ENCODE measurements at regions of chr14 and their contacts with region 1.

Region 1: DNA sequence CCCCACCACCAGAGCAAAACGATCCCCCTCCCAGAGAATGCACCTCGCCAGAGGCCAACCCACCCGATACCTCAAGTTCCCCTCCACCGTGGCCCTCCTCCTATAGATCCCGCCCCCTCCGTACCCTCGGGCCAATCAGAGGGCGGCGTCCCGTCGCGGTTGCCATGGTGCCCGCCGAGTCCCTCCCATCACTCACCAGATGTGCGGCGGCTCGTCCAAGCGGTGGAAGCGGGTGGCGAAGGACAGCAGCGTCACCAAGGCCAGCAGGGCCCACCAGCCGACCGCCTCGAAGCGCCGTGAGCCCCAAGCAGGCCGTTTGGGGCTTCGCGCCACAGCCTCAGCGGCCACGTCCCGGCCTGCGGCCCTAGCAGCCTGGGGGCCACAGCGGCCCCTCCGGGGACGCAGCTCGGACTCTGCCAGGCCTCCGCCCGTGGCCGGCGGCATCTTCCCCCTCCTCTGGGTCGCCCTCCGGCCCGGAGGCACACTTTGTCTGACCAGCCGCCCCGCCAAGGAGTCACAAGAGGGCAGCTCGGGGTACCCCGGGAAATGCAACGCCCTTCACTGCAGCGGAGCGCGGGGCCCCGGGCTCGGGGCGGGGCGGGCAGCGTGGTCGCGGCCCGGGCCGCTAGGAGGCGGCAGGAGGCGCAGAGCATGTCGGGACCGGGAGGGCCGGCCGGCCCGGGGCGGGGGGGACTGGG is at the start of gene POMT2:
- DNase-seq: peak; percentile 93
- ATAC-seq: peak; percentile 37
- H3K4me3 Mint-ChIP-seq: peak within 1 kb of the TSS; percentile 95
- H3K27ac Mint-ChIP-seq: peak within 1 kb of the TSS; percentile 99
- H3K4me1 Mint-ChIP-seq: peaks cover 15% of the 10 kb centered on the region
- H3K27me3 Mint-ChIP-seq: no peaks in the 10 kb centered on the region
- total RNA-seq, gene POMT2: 9.3 to 10.6 TPM

Region 2: DNA sequence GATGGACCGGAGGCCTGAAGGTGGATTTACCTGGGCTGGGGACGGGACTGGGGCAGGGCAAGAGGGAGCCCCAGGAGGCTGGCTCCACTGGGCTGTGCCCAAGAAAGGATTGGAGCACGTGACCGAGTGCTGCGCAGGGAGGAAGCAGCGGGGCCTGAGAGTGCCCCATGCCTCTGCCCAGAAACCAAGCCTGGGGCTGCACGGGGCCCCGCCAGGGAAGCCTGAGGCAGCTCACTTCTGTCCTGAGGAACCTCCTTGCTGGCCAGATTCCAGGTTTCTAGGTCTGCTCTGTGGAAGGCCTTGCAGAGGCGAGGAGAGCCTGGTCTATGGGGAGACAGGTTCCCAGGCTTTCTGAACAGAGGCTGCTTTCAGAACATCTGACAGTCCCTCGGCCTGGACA is 59.8 kb before region 1 on chr14:
- POLR2A ChIA-PET with region 1: no interaction called
- DNase-seq: no peak
- ATAC-seq: no peak
- H3K4me3 Mint-ChIP-seq: no peak overlapping the region
- H3K27ac Mint-ChIP-seq: no peak overlapping the region
- H3K4me1 Mint-ChIP-seq: no peaks in the 10 kb centered on the region
- H3K27me3 Mint-ChIP-seq: peaks cover 24% of the 10 kb centered on the region

Region 3: GRCh38 chr14:77376771-77377501 is 56.5 kb after region 1 on chr14 and contains the starts of genes SAMD15 and TMED8:
- POLR2A ChIA-PET with region 1: interaction called, 23 read pairs
- DNase-seq: peak; percentile 89
- ATAC-seq: peak; percentile 97
- H3K4me3 Mint-ChIP-seq: peak within 1 kb of the TSS; percentile 93
- H3K27ac Mint-ChIP-seq: peak within 1 kb of the TSS; percentile 90
- H3K4me1 Mint-ChIP-seq: peaks cover 27% of the 10 kb centered on the region
- H3K27me3 Mint-ChIP-seq: peaks cover 4% of the 10 kb centered on the region
- total RNA-seq, gene SAMD15: not detected
- total RNA-seq, gene TMED8: 14.9 to 15.2 TPM